CD14-positive monocyte (primary cell): ENCODE measurements at regions of chr5 and their contacts with region 1.

Region 1: GRCh38 chr5:132704875-132705274 is 31.1 kb downstream of the IL4 start:
- DNase-seq: no peak
- H3K4me3 ChIP-seq: no peak overlapping the region
- H3K4me3 Mint-ChIP-seq: no peak overlapping the region
- H3K27ac ChIP-seq: no peak overlapping the region
- H3K27ac Mint-ChIP-seq: no peak overlapping the region
- H3K4me1 ChIP-seq: no peaks in the 10 kb centered on the region
- H3K4me1 Mint-ChIP-seq: peaks cover 6% of the 10 kb centered on the region
- H3K27me3 ChIP-seq: no peaks in the 10 kb centered on the region
- H3K27me3 Mint-ChIP-seq: no peaks in the 10 kb centered on the region
- CTCF ChIP-seq: no peak

Region 2: GRCh38 chr5:132259069-132259851 is 445.6 kb before region 1 on chr5:
- intact Hi-C with region 1: loop called in 1 of 2 experiments (anchors 10 kb)
- DNase-seq: no peak
- H3K4me3 ChIP-seq: no peak overlapping the region
- H3K4me3 Mint-ChIP-seq: no peak overlapping the region
- H3K27ac ChIP-seq: no peak overlapping the region
- H3K27ac Mint-ChIP-seq: peak overlapping the region in 2 of 7 donors; percentile 11 to 37
- H3K4me1 ChIP-seq: peaks cover 8 to 10% of the 10 kb centered on the region in 2 donors
- H3K4me1 Mint-ChIP-seq: peaks cover 13% of the 10 kb centered on the region
- H3K27me3 ChIP-seq: peaks cover 10 to 34% of the 10 kb centered on the region in 2 donors
- H3K27me3 Mint-ChIP-seq: peaks cover 27 to 47% (median 40%) of the 10 kb centered on the region in 3 donors
- CTCF ChIP-seq: no peak

Region 3: GRCh38 chr5:132293066-132293991 is 411.5 kb before region 1 on chr5:
- intact Hi-C with region 1: no loop called
- DNase-seq: peak; percentile 77 to 92 (median 87)
- H3K4me3 ChIP-seq: peak overlapping the region; percentile 74 to 88 (median 77)
- H3K4me3 Mint-ChIP-seq: peak overlapping the region; percentile 96 to 98
- H3K27ac ChIP-seq: peak overlapping the region; percentile 96 to 98
- H3K27ac Mint-ChIP-seq: peak overlapping the region; percentile 99 to 100 (median 99)
- H3K4me1 ChIP-seq: peaks cover 54 to 73% of the 10 kb centered on the region in 2 donors
- H3K4me1 Mint-ChIP-seq: peaks cover 58% of the 10 kb centered on the region
- H3K27me3 ChIP-seq: no peaks in the 10 kb centered on the region
- H3K27me3 Mint-ChIP-seq: no peaks in the 10 kb centered on the region
- CTCF ChIP-seq: no peak